GM12878 (cell line): ENCODE measurements at regions of chr15 and their contacts with region 1.

Region 1: GRCh38 chr15:41429003-41429890 is 12.4 kb downstream of the RTF1 start:
- DNase-seq: peak; percentile 65
- ATAC-seq: peak; percentile 92
- H3K4me3 ChIP-seq: peak overlapping the region; percentile 59; the same call in 1 of the 2 replicates
- H3K27ac ChIP-seq: peak overlapping the region; percentile 91
- H3K4me1 ChIP-seq: peaks cover 20% of the 10 kb centered on the region
- H3K27me3 ChIP-seq: no peaks in the 10 kb centered on the region
- CTCF ChIP-seq: no peak
- EP300 ChIP-seq: no peak
- POLR2A ChIP-seq: no peak
- RAD21 ChIP-seq: no peak

Region 2: GRCh38 chr15:41263891-41264351 is 165.3 kb before region 1 on chr15:
- CTCF ChIA-PET with region 1: no interaction called
- POLR2A ChIA-PET with region 1: no interaction called
- RAD21 ChIA-PET with region 1: no interaction called
- SMC1A ChIA-PET with region 1: no interaction called
- in situ Hi-C with region 1: no loop called
- intact Hi-C with region 1: no loop called
- DNase-seq: no peak
- ATAC-seq: no peak
- H3K4me3 ChIP-seq: no peak overlapping the region
- H3K27ac ChIP-seq: no peak overlapping the region
- H3K4me1 ChIP-seq: peaks cover 10% of the 10 kb centered on the region
- H3K27me3 ChIP-seq: no peaks in the 10 kb centered on the region
- CTCF ChIP-seq: no peak
- EP300 ChIP-seq: no peak
- POLR2A ChIP-seq: no peak
- RAD21 ChIP-seq: no peak

Region 3: DNA sequence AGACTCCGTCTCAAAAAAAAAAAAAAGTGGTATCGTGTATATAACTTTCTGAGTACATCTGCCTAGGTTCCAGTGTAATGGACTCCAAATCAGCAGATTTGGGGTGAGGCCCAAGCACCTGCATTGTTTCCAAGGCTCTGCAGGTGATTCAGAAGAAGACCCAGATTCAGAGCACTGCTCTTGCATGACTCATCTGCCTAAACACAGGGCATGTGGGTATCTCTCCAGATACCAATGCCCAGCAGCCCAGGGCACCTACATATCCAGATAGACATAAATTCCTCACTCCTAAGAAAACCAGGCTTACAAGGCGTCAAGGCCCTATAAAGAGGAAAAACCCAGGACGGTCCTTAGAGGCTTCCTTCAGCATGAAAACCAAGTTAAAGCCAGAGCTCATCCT is 51.3 kb before region 1 on chr15:
- CTCF ChIA-PET with region 1: no interaction called
- POLR2A ChIA-PET with region 1: no interaction called
- RAD21 ChIA-PET with region 1: no interaction called
- SMC1A ChIA-PET with region 1: no interaction called
- in situ Hi-C with region 1: no loop called
- intact Hi-C with region 1: no loop called
- DNase-seq: no peak
- ATAC-seq: no peak
- H3K4me3 ChIP-seq: no peak overlapping the region
- H3K27ac ChIP-seq: no peak overlapping the region
- H3K4me1 ChIP-seq: no peaks in the 10 kb centered on the region
- H3K27me3 ChIP-seq: no peaks in the 10 kb centered on the region
- CTCF ChIP-seq: no peak
- EP300 ChIP-seq: no peak
- POLR2A ChIP-seq: no peak
- RAD21 ChIP-seq: no peak

Region 4: DNA sequence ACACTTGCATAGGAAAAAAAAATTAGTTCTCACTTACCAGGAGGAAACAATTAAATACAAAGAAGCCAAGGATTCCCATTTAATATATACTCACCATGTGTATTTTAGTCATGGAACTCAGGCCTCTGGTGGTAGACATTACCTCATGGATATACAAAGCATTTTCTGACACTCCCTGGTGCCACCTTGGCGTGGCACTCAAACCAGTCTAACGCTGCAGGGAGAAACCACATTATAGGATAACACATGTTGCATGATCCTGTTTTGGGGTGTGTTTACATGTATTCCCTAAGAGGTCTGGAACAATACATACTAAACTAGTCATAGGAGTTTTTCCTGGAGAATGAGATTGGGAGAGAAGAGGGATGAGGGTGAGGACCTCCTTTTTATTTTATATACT is 18.2 kb before region 1 on chr15:
- CTCF ChIA-PET with region 1: interaction called, 4 read pairs
- POLR2A ChIA-PET with region 1: interaction called, 10 read pairs
- RAD21 ChIA-PET with region 1: no interaction called
- SMC1A ChIA-PET with region 1: interaction called, 4 read pairs
- in situ Hi-C with region 1: no loop called
- intact Hi-C with region 1: no loop called
- DNase-seq: no peak
- ATAC-seq: no peak
- H3K4me3 ChIP-seq: no peak overlapping the region
- H3K27ac ChIP-seq: no peak overlapping the region
- H3K4me1 ChIP-seq: peaks cover 3% of the 10 kb centered on the region; the same call in 1 of the 2 replicates
- H3K27me3 ChIP-seq: no peaks in the 10 kb centered on the region
- CTCF ChIP-seq: no peak
- EP300 ChIP-seq: no peak
- POLR2A ChIP-seq: no peak
- RAD21 ChIP-seq: no peak

Region 5: GRCh38 chr15:41417407-41418195 is 11.6 kb before region 1 on chr15:
- CTCF ChIA-PET with region 1: interaction called, 4 read pairs
- POLR2A ChIA-PET with region 1: interaction called, 8 read pairs
- RAD21 ChIA-PET with region 1: interaction called, 4 read pairs
- SMC1A ChIA-PET with region 1: interaction called, 20 read pairs
- in situ Hi-C with region 1: no loop called
- intact Hi-C with region 1: no loop called
- DNase-seq: no peak
- ATAC-seq: peak; percentile 68
- H3K4me3 ChIP-seq: peak overlapping the region; percentile 99
- H3K27ac ChIP-seq: peak overlapping the region; percentile 14
- H3K4me1 ChIP-seq: peaks cover 3% of the 10 kb centered on the region; the same call in 1 of the 2 replicates
- H3K27me3 ChIP-seq: no peaks in the 10 kb centered on the region
- CTCF ChIP-seq: no peak
- EP300 ChIP-seq: no peak
- POLR2A ChIP-seq: no peak
- RAD21 ChIP-seq: no peak